ENCODE measurements at regions of chr3 and their contacts with region 1.

Region 1: GRCh38 chr3:38521391-38521987 is 25.3 kb downstream of the EXOG start:
- DNase-seq: no peak
- ATAC-seq: peak; percentile 63 to 82 (median 70)
- H3K4me3 ChIP-seq: no peak overlapping the region
- H3K27ac ChIP-seq: no peak overlapping the region
- H3K4me1 ChIP-seq: peaks cover 9% of the 10 kb centered on the region
- H3K27me3 ChIP-seq: no peaks in the 10 kb centered on the region
- CTCF ChIP-seq: peak; percentile 96

Region 2: DNA sequence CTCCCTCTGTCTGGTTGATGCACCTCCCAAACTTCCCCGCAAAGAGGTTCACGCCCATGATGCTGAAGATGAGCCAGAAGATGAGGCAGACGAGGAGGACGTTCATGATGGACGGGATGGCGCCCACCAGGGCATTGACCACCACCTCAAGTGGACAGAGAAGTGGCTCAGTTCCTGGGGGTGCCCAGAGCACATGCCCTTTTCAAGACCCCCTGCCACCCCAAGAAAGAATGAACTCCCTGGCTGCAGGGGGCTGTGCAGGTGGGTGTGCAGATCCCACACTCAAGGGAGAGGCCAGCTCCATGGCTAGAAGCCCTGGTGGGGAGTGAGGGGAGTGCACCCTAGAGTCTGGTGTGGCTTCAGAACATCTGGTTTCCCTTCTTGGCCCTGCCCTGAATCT is 38.8 kb after region 1 on chr3:
- intact Hi-C with region 1: no loop called
- DNase-seq: peak in 1 of 2 donors; percentile 38
- ATAC-seq: no peak
- H3K4me3 ChIP-seq: no peak overlapping the region
- H3K27ac ChIP-seq: no peak overlapping the region
- H3K4me1 ChIP-seq: no peaks in the 10 kb centered on the region
- H3K27me3 ChIP-seq: no peaks in the 10 kb centered on the region
- CTCF ChIP-seq: no peak

Region 3: DNA sequence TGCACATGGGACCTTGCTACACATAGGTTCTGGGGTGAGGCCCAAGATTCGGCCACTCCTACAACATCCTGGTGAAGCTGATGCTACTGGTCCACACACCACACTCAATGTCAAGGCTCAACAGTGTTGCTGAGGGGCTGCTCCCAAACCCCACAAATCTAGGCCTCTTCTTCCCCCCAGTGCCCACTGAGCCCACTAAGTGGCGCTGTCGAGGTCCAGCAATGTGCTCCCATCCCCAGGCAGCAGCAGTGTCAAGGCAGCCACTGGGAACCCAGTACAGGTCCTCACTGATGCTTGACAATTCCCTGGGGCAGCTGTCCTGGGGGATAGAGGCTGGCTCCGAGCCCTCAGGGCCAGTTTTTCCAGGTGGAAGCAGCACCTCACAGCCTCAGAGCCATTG is 106.5 kb after region 1 on chr3:
- intact Hi-C with region 1: no loop called
- DNase-seq: no peak
- ATAC-seq: peak in 1 of 4 donors; percentile 36
- H3K4me3 ChIP-seq: no peak overlapping the region
- H3K27ac ChIP-seq: no peak overlapping the region
- H3K4me1 ChIP-seq: no peaks in the 10 kb centered on the region
- H3K27me3 ChIP-seq: peaks cover 0 to 3% (median 2%) of the 10 kb centered on the region in 3 donors
- CTCF ChIP-seq: no peak

Region 4: GRCh38 chr3:38651154-38651789 is 129.8 kb after region 1 on chr3:
- intact Hi-C with region 1: loop called (anchors 1 to 2 kb)
- DNase-seq: peak; percentile 67 to 80
- ATAC-seq: peak; percentile 68 to 90 (median 83)
- H3K4me3 ChIP-seq: no peak overlapping the region
- H3K27ac ChIP-seq: no peak overlapping the region
- H3K4me1 ChIP-seq: peaks cover 7% of the 10 kb centered on the region
- H3K27me3 ChIP-seq: peaks cover 0 to 48% (median 9%) of the 10 kb centered on the region in 3 donors
- CTCF ChIP-seq: peak; percentile 97

Region 5: DNA sequence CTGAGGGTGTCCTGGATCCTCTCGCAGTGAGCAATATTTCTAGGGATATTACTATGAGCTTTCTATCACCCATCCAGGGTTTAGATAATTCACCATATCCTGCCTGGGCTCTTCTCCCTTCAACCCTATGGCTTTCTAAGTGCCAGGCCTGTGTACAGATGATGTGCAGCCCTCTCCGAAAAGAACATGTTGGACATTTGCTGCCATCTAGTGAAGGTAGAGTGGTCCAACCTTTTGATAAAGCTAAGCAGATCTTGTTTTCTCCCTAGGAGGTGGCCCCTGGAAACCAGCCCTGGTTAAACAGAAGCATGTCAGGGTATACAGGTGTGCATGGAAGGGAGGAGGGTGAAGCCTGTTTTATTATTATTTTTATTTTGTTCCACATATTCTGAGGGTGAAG is 322.4 kb after region 1 on chr3:
- intact Hi-C with region 1: loop called in 1 of 2 experiments (anchors 10 kb)
- DNase-seq: no peak
- ATAC-seq: no peak
- H3K4me3 ChIP-seq: no peak overlapping the region
- H3K27ac ChIP-seq: no peak overlapping the region
- H3K4me1 ChIP-seq: no peaks in the 10 kb centered on the region
- H3K27me3 ChIP-seq: no peaks in the 10 kb centered on the region
- CTCF ChIP-seq: peak; percentile 19

Region 6: DNA sequence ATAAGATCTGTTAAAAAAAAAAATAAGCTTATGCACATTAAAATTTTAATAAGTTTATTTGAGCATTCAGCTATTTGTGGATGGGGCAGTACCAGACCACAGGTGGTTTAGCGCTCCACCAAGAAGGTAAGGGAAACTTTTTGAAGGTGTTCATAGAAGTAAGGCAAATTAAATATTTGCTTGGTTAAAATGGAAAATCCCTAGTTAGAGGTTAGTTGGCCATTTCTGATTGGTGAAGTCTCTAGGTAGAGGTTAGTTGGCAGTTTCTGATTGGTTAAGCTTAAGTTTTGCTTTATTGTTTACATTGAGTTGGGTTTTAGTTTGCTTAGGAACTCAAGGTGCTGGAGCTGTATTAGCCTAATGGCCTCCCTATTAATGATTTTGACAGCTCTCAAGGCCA is 499.5 kb after region 1 on chr3:
- intact Hi-C with region 1: loop called in 1 of 2 experiments (anchors 10 kb)
- DNase-seq: no peak
- ATAC-seq: no peak
- H3K4me3 ChIP-seq: no peak overlapping the region
- H3K27ac ChIP-seq: no peak overlapping the region
- H3K4me1 ChIP-seq: no peaks in the 10 kb centered on the region
- H3K27me3 ChIP-seq: peaks cover 0 to 4% (median 2%) of the 10 kb centered on the region in 3 donors
- CTCF ChIP-seq: no peak

Region 7: DNA sequence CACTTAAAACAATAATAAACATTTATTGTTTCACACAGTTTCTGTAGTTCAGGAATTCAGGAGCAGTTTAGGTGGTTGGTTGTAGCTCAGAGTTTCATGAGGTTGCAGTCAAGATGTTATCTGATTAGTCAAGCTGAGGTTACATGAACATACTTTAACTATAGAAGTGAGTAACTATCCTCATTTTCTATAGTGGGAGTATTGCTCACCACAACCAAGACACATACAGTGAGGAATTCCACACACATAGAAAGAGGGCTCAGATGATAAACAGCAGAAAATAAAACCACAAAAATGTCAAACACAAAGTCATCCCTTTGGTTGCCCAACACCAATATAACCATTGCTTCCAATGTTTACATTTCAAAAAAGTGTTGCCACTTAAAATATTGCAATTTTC is 516.7 kb after region 1 on chr3:
- intact Hi-C with region 1: loop called in 1 of 2 experiments (anchors 10 kb)
- DNase-seq: no peak
- ATAC-seq: no peak
- H3K4me3 ChIP-seq: no peak overlapping the region
- H3K27ac ChIP-seq: no peak overlapping the region
- H3K4me1 ChIP-seq: no peaks in the 10 kb centered on the region
- H3K27me3 ChIP-seq: no peaks in the 10 kb centered on the region
- CTCF ChIP-seq: no peak

Measured in psoas muscle (tissue), 8 donors.